ENCODE measurements at regions of chr6 and their contacts with region 1.

Region 1: DNA sequence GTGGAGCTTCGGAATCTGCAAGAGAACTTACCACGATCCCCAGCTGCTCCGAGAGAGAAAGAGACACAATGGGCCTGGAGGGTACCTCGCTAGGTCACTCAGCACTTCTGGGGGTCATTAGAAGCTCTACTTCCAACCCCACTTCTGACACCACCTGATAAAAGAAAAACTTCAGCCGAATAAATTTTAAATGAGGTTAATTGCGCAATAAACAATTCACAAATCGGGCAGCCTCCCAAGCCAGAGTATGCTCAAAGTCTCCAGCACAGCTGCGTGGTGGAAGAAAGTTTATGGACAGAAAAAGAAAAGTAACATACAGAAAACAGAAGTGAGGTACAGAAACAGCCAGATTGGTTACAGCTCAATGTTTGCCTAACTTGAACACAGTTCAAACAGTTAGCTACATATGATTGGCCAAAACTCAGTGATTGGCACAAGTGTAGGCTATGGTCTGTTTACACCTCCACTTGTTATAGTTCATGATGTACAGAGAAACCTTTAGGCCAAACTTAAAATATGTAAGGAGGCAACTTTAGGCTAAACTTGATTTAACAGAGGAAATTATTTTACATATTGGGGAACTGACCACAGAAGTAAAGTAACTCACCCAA is 52.6 kb downstream of the COL11A2 start:
- DNase-seq: no peak
- ATAC-seq: no peak
- H3K4me3 Mint-ChIP-seq: no peak overlapping the region
- H3K27ac Mint-ChIP-seq: no peak overlapping the region
- H3K4me1 Mint-ChIP-seq: no peaks in the 10 kb centered on the region
- H3K27me3 Mint-ChIP-seq: peaks cover 8% of the 10 kb centered on the region
- CTCF ChIP-seq: no peak

Region 2: DNA sequence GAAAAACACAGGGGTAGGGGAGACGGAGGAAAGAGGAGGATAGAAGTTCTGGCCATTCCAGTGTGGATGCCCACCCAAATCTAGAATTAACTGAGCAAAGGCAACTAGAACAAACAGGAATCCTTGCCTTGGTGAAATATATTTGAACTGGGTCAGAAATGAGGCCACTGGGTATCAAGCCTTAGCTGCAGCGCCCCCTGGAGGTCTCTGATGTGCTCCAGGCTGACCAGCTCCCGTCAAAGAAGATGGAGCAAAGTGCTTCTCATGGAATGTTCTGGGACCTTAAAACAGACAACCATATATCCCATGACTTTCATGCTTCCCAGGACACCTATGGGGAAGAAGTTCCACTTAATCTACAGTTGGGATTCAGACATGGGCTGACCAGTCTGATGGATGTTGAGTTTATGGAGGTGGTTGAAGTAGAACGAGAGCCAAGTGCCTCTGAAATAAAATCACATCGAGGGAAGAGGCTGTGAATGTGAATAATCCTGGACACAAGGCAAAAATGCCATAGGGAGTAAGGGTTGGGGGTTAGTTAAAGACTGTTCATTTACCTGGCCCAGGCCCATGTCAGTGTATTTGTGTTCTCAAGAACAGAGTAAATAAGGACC is 13.5 kb before region 1 on chr6:
- CTCF ChIA-PET with region 1: interaction called, 15 read pairs
- POLR2A ChIA-PET with region 1: no interaction called
- intact Hi-C with region 1: no loop called
- DNase-seq: peak; percentile 86
- ATAC-seq: peak; percentile 56
- H3K4me3 Mint-ChIP-seq: no peak overlapping the region
- H3K27ac Mint-ChIP-seq: no peak overlapping the region
- H3K4me1 Mint-ChIP-seq: no peaks in the 10 kb centered on the region
- H3K27me3 Mint-ChIP-seq: peaks cover 3% of the 10 kb centered on the region
- CTCF ChIP-seq: peak; percentile 71

Measured in activated CD8-positive, alpha-beta T cell treated with anti-CD3 and anti-CD28 coated beads for 36 hours (primary cell).